MCF 10A (cell line): ENCODE measurements at regions of chr1 and their contacts with region 1.

Region 1: GRCh38 chr1:174262349-174263241 is 103.3 kb downstream of the RABGAP1L start:
- DNase-seq: peak; percentile 59
- H3K4me3 Mint-ChIP-seq: no peak overlapping the region
- H3K27ac Mint-ChIP-seq: no peak overlapping the region
- H3K4me1 Mint-ChIP-seq: no peaks in the 10 kb centered on the region
- H3K27me3 Mint-ChIP-seq: no peaks in the 10 kb centered on the region
- CTCF ChIP-seq: peak; percentile 90

Region 2: GRCh38 chr1:174097426-174097825 is 165.2 kb before region 1 on chr1:
- CTCF ChIA-PET with region 1: interaction called, 11 read pairs
- POLR2A ChIA-PET with region 1: no interaction called
- intact Hi-C with region 1: loop called (anchors 1 kb)
- DNase-seq: no peak
- H3K4me3 Mint-ChIP-seq: no peak overlapping the region
- H3K27ac Mint-ChIP-seq: no peak overlapping the region
- H3K4me1 Mint-ChIP-seq: no peaks in the 10 kb centered on the region
- H3K27me3 Mint-ChIP-seq: no peaks in the 10 kb centered on the region
- CTCF ChIP-seq: no peak

Region 3: GRCh38 chr1:174247472-174247871 is 15.1 kb before region 1 on chr1:
- CTCF ChIA-PET with region 1: interaction called, 20 read pairs
- POLR2A ChIA-PET with region 1: no interaction called
- intact Hi-C with region 1: no loop called
- DNase-seq: no peak
- H3K4me3 Mint-ChIP-seq: no peak overlapping the region
- H3K27ac Mint-ChIP-seq: no peak overlapping the region
- H3K4me1 Mint-ChIP-seq: no peaks in the 10 kb centered on the region
- H3K27me3 Mint-ChIP-seq: no peaks in the 10 kb centered on the region
- CTCF ChIP-seq: no peak

Region 4: GRCh38 chr1:174367892-174368291 is 105.3 kb after region 1 on chr1:
- CTCF ChIA-PET with region 1: no interaction called
- POLR2A ChIA-PET with region 1: no interaction called
- intact Hi-C with region 1: no loop called
- DNase-seq: no peak
- H3K4me3 Mint-ChIP-seq: no peak overlapping the region
- H3K27ac Mint-ChIP-seq: no peak overlapping the region
- H3K4me1 Mint-ChIP-seq: no peaks in the 10 kb centered on the region
- H3K27me3 Mint-ChIP-seq: no peaks in the 10 kb centered on the region
- CTCF ChIP-seq: no peak

Region 5: DNA sequence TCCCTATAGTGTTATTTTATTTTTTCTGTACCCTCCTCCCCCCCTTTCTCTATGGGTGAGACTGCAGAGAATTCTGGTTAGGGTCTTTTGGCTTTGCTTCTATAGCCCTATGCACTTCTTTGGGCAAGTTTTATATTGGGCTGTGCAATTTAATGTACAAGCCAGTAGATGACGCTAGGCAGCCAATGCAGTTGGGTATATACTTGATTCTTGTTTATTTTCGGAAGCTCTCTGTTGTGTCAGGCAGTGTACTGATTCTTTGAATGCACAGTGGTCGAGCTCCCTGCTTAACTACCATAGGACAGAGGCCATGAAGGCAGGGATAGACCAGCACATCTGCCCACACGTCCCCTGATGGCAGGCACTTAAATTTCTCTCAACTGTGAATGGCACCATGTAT is 151.0 kb after region 1 on chr1:
- CTCF ChIA-PET with region 1: interaction called, 12 read pairs
- POLR2A ChIA-PET with region 1: no interaction called
- intact Hi-C with region 1: no loop called
- DNase-seq: no peak
- H3K4me3 Mint-ChIP-seq: no peak overlapping the region
- H3K27ac Mint-ChIP-seq: peak overlapping the region; percentile 87
- H3K4me1 Mint-ChIP-seq: peaks cover 6% of the 10 kb centered on the region
- H3K27me3 Mint-ChIP-seq: no peaks in the 10 kb centered on the region
- CTCF ChIP-seq: peak; percentile 11

Region 6: GRCh38 chr1:174671826-174672225 is 409.2 kb after region 1 on chr1:
- CTCF ChIA-PET with region 1: interaction called, 10 read pairs
- POLR2A ChIA-PET with region 1: no interaction called
- intact Hi-C with region 1: no loop called
- DNase-seq: no peak
- H3K4me3 Mint-ChIP-seq: no peak overlapping the region
- H3K27ac Mint-ChIP-seq: no peak overlapping the region
- H3K4me1 Mint-ChIP-seq: no peaks in the 10 kb centered on the region
- H3K27me3 Mint-ChIP-seq: no peaks in the 10 kb centered on the region
- CTCF ChIP-seq: no peak

Region 7: DNA sequence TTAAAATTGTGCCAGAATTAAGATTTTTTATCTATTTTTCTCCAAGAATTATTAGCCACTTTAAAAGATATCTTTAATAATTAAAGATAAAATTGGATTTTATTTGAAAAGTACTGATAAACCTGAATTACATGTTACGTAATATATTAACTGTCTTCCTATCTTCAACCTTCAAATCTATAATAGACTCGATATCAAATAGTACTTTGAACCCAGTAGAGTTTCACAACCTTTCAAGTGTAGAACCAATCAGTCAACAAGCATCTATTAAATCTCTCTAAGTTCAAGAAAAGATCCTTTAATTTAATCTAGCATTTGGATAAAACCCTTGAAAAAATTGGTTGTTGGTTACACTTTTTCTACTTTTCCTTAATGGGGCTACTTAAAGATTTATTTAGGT is 456.6 kb after region 1 on chr1:
- CTCF ChIA-PET with region 1: interaction called, 191 read pairs
- POLR2A ChIA-PET with region 1: no interaction called
- intact Hi-C with region 1: no loop called
- DNase-seq: no peak
- H3K4me3 Mint-ChIP-seq: no peak overlapping the region
- H3K27ac Mint-ChIP-seq: no peak overlapping the region
- H3K4me1 Mint-ChIP-seq: no peaks in the 10 kb centered on the region
- H3K27me3 Mint-ChIP-seq: no peaks in the 10 kb centered on the region
- CTCF ChIP-seq: no peak

Region 8: DNA sequence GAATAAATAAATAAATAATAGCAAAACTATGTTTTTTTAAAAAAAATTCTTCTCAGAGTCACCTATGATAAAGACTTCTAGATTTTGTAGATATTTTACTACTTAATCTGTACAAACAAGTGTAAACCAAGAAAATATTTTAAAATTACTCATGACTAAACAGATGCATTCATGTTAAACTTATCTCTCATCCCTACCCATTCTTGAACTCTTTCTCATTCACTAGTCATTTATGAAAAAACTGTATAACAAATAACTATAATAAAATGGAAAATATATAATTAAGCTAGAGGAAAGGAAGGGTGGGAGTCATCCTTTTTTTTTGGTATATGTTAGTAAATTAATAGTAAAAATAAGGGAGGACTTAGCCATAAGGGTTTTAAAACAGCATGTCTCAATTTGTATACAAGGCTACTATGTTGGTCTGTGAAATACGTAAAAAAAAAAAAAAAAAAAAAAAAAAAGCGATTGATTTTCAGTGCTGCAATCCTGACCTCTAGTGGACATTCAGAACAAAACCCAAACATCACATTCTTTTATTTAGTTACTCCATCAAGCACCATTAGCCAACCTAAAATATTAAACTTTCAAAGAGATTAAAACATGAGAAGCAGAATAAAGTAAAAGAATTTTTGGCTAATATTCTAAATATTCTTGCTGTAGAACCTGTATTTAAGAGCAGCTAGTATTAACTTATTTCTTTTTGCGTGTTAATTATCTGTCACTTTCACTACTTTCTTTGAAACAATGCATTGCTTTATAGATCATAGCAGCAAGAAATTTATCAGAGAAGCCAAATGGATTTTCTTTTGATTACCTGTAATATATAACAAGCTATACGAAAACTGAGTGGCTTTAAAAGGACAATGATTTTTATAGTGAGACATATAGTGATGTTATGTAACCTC is 481.3 kb after region 1 on chr1:
- CTCF ChIA-PET with region 1: interaction called, 190 read pairs
- POLR2A ChIA-PET with region 1: interaction called, 7 read pairs
- intact Hi-C with region 1: loop called (anchors 1 kb)
- DNase-seq: peak; percentile 65
- H3K4me3 Mint-ChIP-seq: no peak overlapping the region
- H3K27ac Mint-ChIP-seq: no peak overlapping the region
- H3K4me1 Mint-ChIP-seq: no peaks in the 10 kb centered on the region
- H3K27me3 Mint-ChIP-seq: no peaks in the 10 kb centered on the region
- CTCF ChIP-seq: peak; percentile 76